Mammary epithelial cell (primary cell): ENCODE measurements at regions of chr9 and their contacts with region 1.

Region 1: DNA sequence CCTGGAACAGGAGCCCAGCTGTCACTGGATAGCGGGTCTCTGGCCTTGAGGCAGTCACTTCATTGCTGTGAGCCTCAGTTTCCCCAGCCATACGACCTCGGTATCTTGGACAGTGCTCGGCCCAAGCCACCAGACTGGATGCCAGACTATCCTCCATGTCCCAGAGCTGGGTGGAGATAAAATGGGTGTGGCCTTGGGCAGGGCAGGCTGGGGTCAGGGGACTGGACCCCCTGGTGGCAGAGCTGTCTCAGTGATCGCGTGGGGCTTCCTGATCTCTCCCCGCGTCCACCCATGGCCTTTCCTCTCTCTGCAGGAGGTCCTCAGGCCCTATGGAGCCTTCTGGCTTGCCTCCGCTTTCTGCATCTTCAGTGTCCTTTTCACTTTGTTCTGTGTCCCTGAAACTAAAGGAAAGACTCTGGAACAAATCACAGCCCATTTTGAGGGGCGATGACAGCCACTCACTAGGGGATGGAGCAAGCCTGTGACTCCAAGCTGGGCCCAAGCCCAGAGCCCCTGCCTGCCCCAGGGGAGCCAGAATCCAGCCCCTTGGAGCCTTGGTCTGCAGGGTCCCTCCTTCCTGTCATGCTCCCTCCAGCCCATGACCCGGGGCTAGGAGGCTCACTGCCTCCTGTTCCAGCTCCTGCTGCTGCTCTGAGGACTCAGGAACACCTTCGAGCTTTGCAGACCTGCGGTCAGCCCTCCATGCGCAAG is 10.0 kb downstream of the SLC2A8 start:
- DNase-seq: no peak
- H3K4me3 ChIP-seq: no peak overlapping the region
- H3K27ac ChIP-seq: no peak overlapping the region
- H3K4me1 ChIP-seq: no peaks in the 10 kb centered on the region
- H3K27me3 ChIP-seq: no peaks in the 10 kb centered on the region
- CTCF ChIP-seq: no peak

Region 2: GRCh38 chr9:127370672-127371648 is 36.0 kb before region 1 on chr9:
- CTCF ChIA-PET with region 1: no interaction called
- dilution Hi-C with region 1: loop called (anchors 5 kb)
- in situ Hi-C with region 1: no loop called
- intact Hi-C with region 1: no loop called
- DNase-seq: no peak
- H3K4me3 ChIP-seq: no peak overlapping the region
- H3K27ac ChIP-seq: no peak overlapping the region
- H3K4me1 ChIP-seq: no peaks in the 10 kb centered on the region
- H3K27me3 ChIP-seq: peaks cover 5% of the 10 kb centered on the region
- CTCF ChIP-seq: no peak

Region 3: DNA sequence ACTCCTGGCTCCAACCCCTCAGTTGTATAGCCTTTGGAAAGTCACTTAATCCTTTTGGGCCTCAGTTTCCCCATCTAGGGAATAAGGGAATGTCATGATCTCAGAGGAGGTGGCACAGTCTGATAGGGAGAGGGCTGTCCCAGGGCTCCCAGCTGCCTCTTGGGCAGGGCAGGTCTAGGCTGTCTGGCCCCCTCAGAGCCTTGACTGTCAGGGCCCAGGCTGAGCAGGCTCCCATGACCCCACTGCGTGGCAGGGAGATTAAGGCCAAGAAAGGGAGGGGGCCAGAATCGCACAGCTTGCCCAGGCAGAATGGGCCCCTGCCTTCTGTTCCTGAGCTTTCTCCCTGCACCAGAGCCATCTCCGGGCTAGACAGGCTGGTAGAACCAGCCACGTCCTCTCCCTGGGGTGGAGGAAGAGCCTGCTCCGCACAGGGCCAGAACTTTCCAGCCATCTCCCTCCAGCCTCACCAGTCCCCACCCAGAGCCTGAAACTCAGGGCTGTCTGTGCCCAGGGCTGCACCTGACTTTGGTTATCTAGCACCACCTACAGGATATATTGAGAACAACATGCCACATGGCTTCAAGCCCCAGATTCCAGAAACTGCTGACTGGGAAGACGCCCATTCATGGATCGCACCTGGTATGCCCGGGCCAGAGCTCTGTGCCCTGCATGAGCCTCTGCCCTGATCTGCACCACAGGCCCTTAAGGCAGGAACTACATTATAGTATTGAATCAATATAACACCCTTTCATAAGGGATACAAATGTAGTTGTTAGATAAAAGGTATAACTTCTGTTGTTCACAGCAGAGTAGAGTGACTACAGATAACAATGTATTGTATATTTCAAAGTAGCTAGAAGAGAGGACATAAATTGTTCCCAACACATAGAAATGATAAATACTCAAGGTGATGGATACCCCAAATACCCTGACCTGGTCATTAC is 628.1 kb after region 1 on chr9:
- CTCF ChIA-PET with region 1: no interaction called
- dilution Hi-C with region 1: no loop called
- in situ Hi-C with region 1: no loop called
- intact Hi-C with region 1: no loop called
- DNase-seq: peak; percentile 80
- H3K4me3 ChIP-seq: no peak overlapping the region
- H3K27ac ChIP-seq: no peak overlapping the region
- H3K4me1 ChIP-seq: no peaks in the 10 kb centered on the region
- H3K27me3 ChIP-seq: no peaks in the 10 kb centered on the region
- CTCF ChIP-seq: peak; percentile 73 to 82